ENCODE measurements at regions of chr1 and their contacts with region 1.

Region 1: DNA sequence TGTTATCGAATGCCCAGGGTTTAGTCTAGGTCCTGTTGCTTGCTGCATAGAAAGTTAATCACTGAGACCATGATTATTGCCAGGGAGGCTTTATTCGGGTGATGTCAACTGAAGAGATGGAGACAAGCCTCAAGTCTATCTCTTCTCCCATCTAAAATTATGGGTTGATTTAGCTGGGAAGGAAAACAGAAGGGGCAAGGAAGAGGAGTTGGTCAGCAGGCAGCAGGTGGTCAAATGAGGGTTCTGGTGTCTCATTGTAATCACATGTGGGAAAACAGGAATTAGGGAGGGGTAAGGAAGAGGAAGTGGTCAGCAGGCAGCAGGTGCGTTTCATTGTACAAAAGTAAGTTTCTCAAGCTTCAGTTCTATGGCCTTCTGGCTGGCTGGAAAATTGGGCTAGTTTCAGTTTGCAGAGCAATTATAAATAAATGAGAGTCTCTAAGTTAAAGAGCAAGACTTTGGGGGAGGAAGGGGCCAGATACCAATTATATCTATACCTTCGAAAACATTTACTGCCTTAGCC is 146.3 kb upstream of the DNAH14 start:
- DNase-seq: no peak
- H3K4me3 ChIP-seq: no peak overlapping the region
- H3K27ac ChIP-seq: no peak overlapping the region
- H3K4me1 ChIP-seq: no peaks in the 10 kb centered on the region
- H3K27me3 ChIP-seq: no peaks in the 10 kb centered on the region
- CTCF ChIP-seq: no peak
- POLR2A ChIP-seq: no peak

Region 2: DNA sequence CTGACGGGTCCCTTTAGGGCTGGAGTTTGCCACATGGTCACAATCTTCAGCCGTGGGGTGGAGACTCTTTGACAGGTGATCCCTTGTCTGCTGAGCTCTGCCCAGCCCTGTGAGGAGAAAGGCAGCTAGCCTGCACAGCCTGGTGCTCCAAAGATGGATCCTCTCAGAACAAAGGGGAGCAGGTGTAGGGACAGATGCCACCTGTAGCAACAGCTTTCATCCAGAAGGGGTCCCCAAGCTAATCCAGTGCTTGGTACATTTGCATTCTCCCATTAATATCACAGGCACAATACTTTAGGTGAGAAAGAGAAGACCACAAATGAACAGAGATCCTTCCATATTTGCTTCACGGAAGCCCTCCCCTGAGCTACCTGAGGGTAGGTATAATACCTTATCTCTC is 1296.8 kb before region 1 on chr1:
- intact Hi-C with region 1: loop called (anchors 10 kb)
- DNase-seq: no peak
- H3K4me3 ChIP-seq: no peak overlapping the region
- H3K27ac ChIP-seq: no peak overlapping the region
- H3K4me1 ChIP-seq: no peaks in the 10 kb centered on the region
- H3K27me3 ChIP-seq: no peaks in the 10 kb centered on the region
- CTCF ChIP-seq: no peak
- POLR2A ChIP-seq: no peak

Region 3: DNA sequence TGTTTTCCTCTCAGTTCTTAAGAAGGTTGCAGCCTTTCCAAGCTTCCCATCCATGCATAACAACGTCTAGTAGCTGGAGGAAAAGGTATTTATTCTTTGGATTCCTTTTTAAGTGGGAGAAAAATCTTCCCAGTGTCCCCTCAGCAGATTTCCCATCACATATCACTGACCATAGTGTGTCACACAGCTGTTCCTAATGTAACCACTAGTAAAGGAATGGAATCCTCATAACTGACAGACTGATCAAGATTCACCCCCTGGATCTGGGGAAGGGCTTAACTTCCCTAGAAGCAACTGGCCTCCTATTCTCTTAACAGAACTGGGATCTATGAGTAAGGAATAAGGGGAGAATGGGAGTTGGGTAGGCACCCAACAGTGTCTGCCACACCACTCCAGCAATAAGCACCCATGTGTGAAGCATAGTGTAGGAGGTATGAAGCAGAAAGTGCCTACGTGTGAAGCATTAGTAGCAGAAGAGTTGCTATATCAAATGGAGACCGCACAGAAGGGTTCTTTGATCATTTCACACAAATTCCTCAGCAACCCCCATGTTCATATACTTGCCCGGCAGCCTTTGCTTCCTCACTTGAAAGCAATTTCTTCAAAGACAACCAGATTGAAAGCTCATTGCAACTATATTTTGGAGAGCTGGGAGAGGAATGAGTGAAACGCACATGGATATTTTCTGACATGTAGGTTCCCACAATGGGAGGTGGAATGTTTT is 118.1 kb after region 1 on chr1:
- intact Hi-C with region 1: no loop called
- DNase-seq: no peak
- H3K4me3 ChIP-seq: no peak overlapping the region
- H3K27ac ChIP-seq: no peak overlapping the region
- H3K4me1 ChIP-seq: no peaks in the 10 kb centered on the region
- H3K27me3 ChIP-seq: no peaks in the 10 kb centered on the region
- CTCF ChIP-seq: no peak
- POLR2A ChIP-seq: no peak